Activated CD4-positive, alpha-beta memory T cell treated with anti-CD3 and anti-CD28 coated beads, Interleukin-2, amount 10 ng/mL, durations not matched to agents 7 days and 5 days (primary cell): ENCODE measurements at regions of chr20 and their contacts with region 1.

Region 1: DNA sequence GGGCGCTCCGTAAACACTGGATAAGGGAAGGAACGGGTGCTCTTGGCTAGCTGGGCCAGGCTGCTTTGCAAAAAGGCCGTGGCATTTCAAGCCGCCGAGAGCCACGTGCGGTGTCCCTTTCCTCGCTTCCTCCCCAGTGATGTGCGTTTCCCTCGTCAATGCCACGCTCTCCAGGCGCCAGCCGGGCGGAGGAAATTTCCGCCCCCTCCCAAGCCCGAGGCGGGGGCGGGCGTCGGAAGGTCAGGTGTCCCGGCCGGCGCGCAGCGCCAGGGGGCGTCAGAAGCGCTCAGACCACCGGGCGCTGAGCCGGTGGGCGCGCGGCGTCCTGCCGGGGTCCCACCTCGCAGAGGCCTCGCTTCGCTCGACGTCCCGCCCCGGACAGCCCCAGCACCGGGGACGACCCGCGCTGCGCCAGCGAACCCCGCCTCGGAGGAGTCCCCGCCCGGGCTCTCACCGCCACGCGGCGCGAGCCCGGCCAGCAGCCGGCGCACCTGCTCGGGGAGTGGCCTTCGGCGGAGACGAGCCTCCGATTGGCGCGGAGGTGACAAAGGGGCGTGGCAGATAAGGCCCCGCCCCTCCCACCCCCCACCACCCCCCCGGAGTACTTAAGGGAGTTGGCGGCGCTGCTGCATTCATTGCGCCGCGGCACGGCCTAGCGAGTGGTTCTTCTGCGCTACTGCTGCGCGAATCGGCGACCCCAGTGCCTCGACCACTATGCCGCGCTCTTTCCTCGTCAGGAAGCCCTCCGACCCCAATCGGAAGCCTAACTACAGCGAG is at the start of gene SNAI1:
- DNase-seq: peak; percentile 81
- H3K4me3 Mint-ChIP-seq: peak within 1 kb of the TSS; percentile 41
- H3K27ac Mint-ChIP-seq: no peak within 1 kb of the TSS
- H3K4me1 Mint-ChIP-seq: peaks cover 26% of the 10 kb centered on the region
- H3K27me3 Mint-ChIP-seq: peaks cover 28% of the 10 kb centered on the region
- total RNA-seq, gene SNAI1: 0.28 to 0.38 TPM

Region 2: GRCh38 chr20:49843770-49844380 is 138.7 kb before region 1 on chr20:
- CTCF ChIA-PET with region 1: no interaction called
- POLR2A ChIA-PET with region 1: no interaction called
- DNase-seq: no peak
- H3K4me3 Mint-ChIP-seq: no peak overlapping the region
- H3K27ac Mint-ChIP-seq: no peak overlapping the region
- H3K4me1 Mint-ChIP-seq: peaks cover 1% of the 10 kb centered on the region
- H3K27me3 Mint-ChIP-seq: no peaks in the 10 kb centered on the region

Region 3: GRCh38 chr20:50085452-50086365 is 103.2 kb after region 1 on chr20:
- CTCF ChIA-PET with region 1: interaction called, 34 read pairs
- POLR2A ChIA-PET with region 1: interaction called, 4 read pairs
- DNase-seq: peak; percentile 38
- H3K4me3 Mint-ChIP-seq: peak overlapping the region; percentile 41
- H3K27ac Mint-ChIP-seq: peak overlapping the region; percentile 67
- H3K4me1 Mint-ChIP-seq: peaks cover 17% of the 10 kb centered on the region
- H3K27me3 Mint-ChIP-seq: no peaks in the 10 kb centered on the region